ENCODE measurements at regions of chr5 and their contacts with region 1.

Region 1: DNA sequence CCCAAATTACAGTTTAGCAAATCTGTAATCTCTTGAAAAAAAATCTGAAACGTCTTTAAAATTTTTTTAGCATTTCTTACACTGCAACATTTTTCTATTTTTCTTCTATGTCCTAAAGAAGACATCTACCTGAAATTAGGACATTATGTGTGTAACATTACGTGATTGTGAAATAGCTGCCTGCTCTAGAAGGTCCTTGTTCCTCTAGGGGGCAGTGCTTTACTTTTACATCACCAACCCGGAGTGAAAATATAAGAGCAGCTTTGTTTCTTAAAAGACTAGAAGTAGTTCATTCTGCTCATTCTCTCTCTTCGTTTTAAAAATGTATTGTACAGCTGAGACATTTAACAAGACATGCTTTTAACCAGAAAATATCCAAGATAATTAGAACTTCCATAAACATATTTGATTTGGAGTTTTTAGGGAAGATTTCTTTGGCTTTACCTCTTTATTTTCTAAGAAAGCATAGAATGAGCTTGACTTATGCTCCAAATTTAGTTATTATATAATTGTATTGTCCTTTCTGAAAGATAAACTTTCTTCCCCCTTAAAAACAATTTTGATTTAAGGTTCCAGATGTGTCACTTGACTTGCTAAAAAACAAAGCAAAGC is 48.1 kb upstream of the RIOK2 start:
- DNase-seq: peak; percentile 86
- ATAC-seq: peak; percentile 87
- H3K4me3 ChIP-seq: no peak overlapping the region
- H3K27ac ChIP-seq: no peak overlapping the region
- H3K4me1 ChIP-seq: no peaks in the 10 kb centered on the region
- H3K27me3 ChIP-seq: no peaks in the 10 kb centered on the region
- CTCF ChIP-seq: peak; percentile 79
- POLR2A ChIP-seq: no peak
- RAD21 ChIP-seq: peak; percentile 77

Region 2: DNA sequence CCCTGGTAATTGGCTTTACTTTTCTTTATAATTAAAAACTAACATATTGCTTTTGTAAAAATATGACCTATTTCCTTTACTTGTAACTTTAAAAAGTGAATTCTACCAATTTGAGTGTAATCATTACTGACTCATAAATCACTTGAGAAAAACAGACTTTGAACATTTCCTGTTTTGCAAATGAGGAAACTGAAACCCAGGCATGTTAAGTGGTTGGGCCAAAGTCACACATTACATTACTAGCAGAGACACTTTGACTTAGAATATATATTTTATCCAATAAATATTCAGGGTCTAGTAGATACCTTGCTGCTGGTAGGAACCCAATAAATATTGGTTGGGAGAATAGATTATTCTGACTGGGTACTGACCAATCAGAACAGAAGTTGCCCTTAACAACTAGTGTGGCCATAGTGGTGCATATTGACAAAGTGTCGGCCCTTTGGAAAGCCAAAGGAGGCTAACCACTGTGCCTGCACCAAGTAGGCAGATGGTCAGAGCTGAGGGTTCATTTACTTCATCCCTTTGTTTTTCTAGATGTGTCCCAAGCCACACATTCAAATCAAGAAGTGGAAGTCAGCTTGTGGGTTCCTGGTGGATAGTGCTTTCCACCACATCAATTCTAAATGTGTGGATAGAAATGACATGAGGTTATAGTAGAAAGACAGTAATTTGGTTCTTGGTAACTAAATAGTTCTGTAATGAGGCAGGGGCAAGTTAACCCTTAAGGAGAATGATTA is 317.0 kb after region 1 on chr5:
- CTCF ChIA-PET with region 1: no interaction called
- POLR2A ChIA-PET with region 1: no interaction called
- dilution Hi-C with region 1: no loop called
- in situ Hi-C with region 1: no loop called
- intact Hi-C with region 1: no loop called
- DNase-seq: no peak
- ATAC-seq: no peak
- H3K4me3 ChIP-seq: no peak overlapping the region
- H3K27ac ChIP-seq: no peak overlapping the region
- H3K4me1 ChIP-seq: 0 out of 2 replicates have a peak, but pooled peaks cover 2% of the 10 kb centered on the region
- H3K27me3 ChIP-seq: no peaks in the 10 kb centered on the region
- CTCF ChIP-seq: no peak
- POLR2A ChIP-seq: no peak
- RAD21 ChIP-seq: no peak

Region 3: DNA sequence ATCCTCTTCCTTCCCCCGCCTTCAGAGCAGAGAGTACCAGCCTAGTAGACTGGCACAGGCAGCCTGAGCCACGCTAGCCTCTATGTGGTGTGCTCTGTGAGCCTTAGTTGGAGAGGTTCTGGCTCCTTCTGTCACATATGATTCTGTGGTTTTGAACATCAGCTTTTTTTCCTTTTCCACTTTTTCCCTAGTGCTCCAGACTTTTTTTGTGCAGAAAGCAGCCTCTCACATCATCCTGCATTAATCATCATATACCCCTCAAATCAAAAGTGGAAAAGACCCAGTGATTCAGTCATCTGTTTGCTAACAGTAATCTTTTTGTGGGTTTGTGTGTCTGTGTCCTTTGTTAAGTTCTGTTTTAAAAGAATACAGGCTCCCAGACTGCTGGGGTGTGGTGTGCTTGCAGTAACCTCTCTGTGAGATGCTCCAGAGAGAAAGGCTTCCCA is 878.5 kb after region 1 on chr5:
- CTCF ChIA-PET with region 1: no interaction called
- POLR2A ChIA-PET with region 1: no interaction called
- dilution Hi-C with region 1: no loop called
- in situ Hi-C with region 1: no loop called
- intact Hi-C with region 1: loop called (anchors 10 kb)
- DNase-seq: peak; percentile 92
- ATAC-seq: peak; percentile 28
- H3K4me3 ChIP-seq: peak overlapping the region; percentile 3; the same call in 1 of the 2 replicates
- H3K27ac ChIP-seq: peak overlapping the region; percentile 99
- H3K4me1 ChIP-seq: peaks cover 10% of the 10 kb centered on the region
- H3K27me3 ChIP-seq: no peaks in the 10 kb centered on the region
- CTCF ChIP-seq: no peak
- POLR2A ChIP-seq: peak; percentile 77; the same call in 1 of the 2 replicates
- RAD21 ChIP-seq: peak; percentile 20; the same call in 1 of the 2 replicates

Measured in IMR-90 (cell line).